ENCODE measurements at regions of chr2 and their contacts with region 1.

Region 1: GRCh38 chr2:190804182-190804795 is 76.3 kb upstream of the GLS start:
- DNase-seq: peak in 1 of 2 donors; percentile 47
- ATAC-seq: no peak
- H3K4me3 ChIP-seq: no peak overlapping the region
- H3K4me3 Mint-ChIP-seq: no peak overlapping the region
- H3K27ac ChIP-seq: no peak overlapping the region
- H3K27ac Mint-ChIP-seq: no peak overlapping the region
- H3K4me1 ChIP-seq: no peaks in the 10 kb centered on the region
- H3K4me1 Mint-ChIP-seq: no peaks in the 10 kb centered on the region
- H3K27me3 ChIP-seq: no peaks in the 10 kb centered on the region
- H3K27me3 Mint-ChIP-seq: no peaks in the 10 kb centered on the region
- CTCF ChIP-seq: peak; percentile 41

Region 2: DNA sequence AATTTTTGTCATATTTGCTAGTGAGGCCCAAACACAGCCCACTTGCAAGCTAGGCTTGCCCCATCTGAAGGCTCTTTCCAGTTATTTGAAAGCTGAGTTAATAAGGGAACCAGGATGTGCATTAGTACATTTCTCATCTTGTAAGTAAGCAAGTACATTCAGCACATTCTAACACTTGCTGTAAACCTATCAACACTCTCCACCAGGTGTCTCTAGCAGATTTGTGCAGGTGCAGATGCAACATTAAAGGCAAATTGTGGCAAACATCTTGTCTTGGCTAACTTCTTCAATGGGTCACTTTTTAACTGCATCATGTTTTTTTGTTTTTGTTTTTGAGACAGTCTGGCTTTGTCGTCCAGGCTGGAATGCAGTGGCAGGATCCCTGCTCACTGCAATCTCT is 421.4 kb before region 1 on chr2:
- intact Hi-C with region 1: loop called (anchors 2 kb)
- DNase-seq: peak in 1 of 2 donors; percentile 82
- ATAC-seq: peak; percentile 64 to 80 (median 79)
- H3K4me3 ChIP-seq: no peak overlapping the region
- H3K4me3 Mint-ChIP-seq: no peak overlapping the region
- H3K27ac ChIP-seq: no peak overlapping the region
- H3K27ac Mint-ChIP-seq: no peak overlapping the region
- H3K4me1 ChIP-seq: no peaks in the 10 kb centered on the region
- H3K4me1 Mint-ChIP-seq: peaks cover 0 to 5% of the 10 kb centered on the region in 2 donors
- H3K27me3 ChIP-seq: no peaks in the 10 kb centered on the region
- H3K27me3 Mint-ChIP-seq: no peaks in the 10 kb centered on the region
- CTCF ChIP-seq: peak; percentile 51